ENCODE measurements at regions of chr5 and their contacts with region 1.

Region 1: DNA sequence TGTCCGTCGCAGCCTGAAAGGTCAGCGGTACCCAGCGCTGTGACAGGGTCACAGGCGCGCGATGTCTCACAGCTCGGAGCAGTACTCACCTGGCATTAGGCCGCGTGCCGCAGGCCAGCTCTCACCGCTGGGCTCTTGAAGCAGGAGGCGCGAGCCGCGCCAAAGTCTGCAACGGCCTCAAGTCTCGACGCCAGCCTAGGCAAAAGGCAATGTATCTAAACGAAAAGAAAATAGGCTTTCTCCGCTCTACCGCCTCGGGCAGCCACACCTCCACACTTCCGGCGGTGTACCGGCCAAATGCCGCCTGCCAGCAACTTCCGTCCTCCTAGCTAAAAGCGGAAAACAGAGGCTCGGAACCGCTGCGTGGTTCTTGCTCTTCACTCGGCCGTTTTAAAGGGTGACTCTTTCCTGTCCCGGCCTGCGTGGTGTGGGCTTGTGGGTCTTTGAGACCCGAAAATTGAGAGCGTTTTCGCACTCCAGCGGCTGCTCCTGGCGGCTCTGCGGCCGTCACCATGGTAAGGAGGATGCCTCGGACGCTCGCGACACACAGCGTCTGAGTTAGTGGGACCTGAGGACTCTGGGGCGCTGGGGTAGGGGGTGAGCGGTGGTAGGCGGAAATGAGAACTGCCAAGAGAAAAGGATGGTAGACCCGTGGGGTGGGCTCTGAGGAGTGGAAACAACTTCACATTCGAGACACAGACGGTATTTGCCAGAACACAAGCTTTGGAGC is at the starts of genes GFM2 and NSA2:
- DNase-seq: peak; percentile 96
- H3K4me3 Mint-ChIP-seq: peak within 1 kb of the TSS; percentile 99
- H3K27ac Mint-ChIP-seq: peak within 1 kb of the TSS; percentile 93
- H3K4me1 Mint-ChIP-seq: peaks cover 39% of the 10 kb centered on the region
- H3K27me3 Mint-ChIP-seq: no peaks in the 10 kb centered on the region
- total RNA-seq, gene GFM2: 27.7 to 28.0 TPM
- total RNA-seq, gene NSA2: 119 to 121 TPM

Region 2: GRCh38 chr5:73565139-73565968 is 1201.7 kb before region 1 on chr5 and contains the starts of genes ANKRA2 and UTP15:
- CTCF ChIA-PET with region 1: no interaction called
- intact Hi-C with region 1: loop called (anchors 5 kb)
- DNase-seq: peak; percentile 99
- H3K4me3 Mint-ChIP-seq: peak within 1 kb of the TSS; percentile 99
- H3K27ac Mint-ChIP-seq: peak within 1 kb of the TSS; percentile 99
- H3K4me1 Mint-ChIP-seq: peaks cover 38% of the 10 kb centered on the region
- H3K27me3 Mint-ChIP-seq: no peaks in the 10 kb centered on the region
- total RNA-seq, gene ANKRA2: 26.5 to 26.9 TPM
- total RNA-seq, gene UTP15: 25.3 to 28.5 TPM

Region 3: DNA sequence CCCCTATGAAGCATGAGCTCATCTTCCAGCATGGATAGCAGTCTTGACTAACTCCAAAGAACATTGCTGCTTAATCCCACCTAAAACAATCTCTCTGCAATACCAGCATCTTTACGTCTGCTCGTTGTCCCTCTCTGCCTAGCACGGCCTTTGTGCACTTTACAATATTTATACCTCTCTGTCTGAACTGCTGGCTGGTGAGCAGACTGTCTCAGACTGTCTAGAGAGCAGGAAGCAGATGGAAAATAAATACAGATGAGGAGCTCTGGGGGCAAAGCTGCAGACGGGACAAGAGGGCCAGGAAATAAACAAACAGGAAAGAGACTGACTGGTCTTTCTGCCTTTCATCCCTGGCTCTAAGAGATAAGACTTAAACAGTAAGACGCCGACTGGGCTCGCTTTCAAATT is 351.3 kb before region 1 on chr5:
- CTCF ChIA-PET with region 1: no interaction called
- intact Hi-C with region 1: no loop called
- DNase-seq: no peak
- H3K4me3 Mint-ChIP-seq: no peak overlapping the region
- H3K27ac Mint-ChIP-seq: no peak overlapping the region
- H3K4me1 Mint-ChIP-seq: no peaks in the 10 kb centered on the region
- H3K27me3 Mint-ChIP-seq: peaks cover 9% of the 10 kb centered on the region

Region 4: GRCh38 chr5:74717596-74717995 is 49.4 kb before region 1 on chr5:
- CTCF ChIA-PET with region 1: no interaction called
- intact Hi-C with region 1: no loop called
- DNase-seq: no peak
- H3K4me3 Mint-ChIP-seq: no peak overlapping the region
- H3K27ac Mint-ChIP-seq: no peak overlapping the region
- H3K4me1 Mint-ChIP-seq: no peaks in the 10 kb centered on the region
- H3K27me3 Mint-ChIP-seq: no peaks in the 10 kb centered on the region

Region 5: DNA sequence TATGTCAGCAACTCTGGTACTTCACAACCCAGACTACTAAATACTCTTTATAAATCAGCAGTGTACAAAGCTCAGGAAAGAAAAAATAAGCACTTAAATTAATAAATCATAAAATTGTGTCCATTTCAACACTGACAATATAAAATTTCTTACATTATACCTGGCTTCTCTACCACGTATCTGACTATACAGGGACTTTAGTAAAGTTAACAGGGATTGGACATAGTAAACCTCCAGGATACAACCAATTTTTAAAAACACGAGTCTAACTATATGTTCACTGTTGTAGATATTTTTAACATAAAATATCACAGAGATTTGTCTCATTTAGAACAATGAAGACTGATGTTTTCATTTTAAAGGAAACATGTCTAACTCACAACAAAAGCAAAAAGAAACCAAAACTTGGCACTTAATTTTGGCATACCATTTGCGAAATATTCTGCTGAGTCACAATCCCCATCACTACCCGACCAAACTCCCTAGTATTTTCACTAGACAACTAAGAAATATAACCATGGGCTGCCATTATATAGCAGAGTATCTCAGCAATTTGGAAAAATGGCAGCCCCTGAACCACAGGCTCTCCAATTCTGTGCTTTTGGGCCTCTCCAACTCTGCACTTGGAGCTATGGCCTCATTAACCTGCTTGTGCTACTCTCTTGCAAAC is 84.8 kb after region 1 on chr5:
- CTCF ChIA-PET with region 1: no interaction called
- intact Hi-C with region 1: loop called (anchors 1 kb)
- DNase-seq: peak; percentile 28
- H3K4me3 Mint-ChIP-seq: peak overlapping the region; percentile 55
- H3K27ac Mint-ChIP-seq: peak overlapping the region; percentile 61
- H3K4me1 Mint-ChIP-seq: peaks cover 31% of the 10 kb centered on the region
- H3K27me3 Mint-ChIP-seq: no peaks in the 10 kb centered on the region

Region 6: DNA sequence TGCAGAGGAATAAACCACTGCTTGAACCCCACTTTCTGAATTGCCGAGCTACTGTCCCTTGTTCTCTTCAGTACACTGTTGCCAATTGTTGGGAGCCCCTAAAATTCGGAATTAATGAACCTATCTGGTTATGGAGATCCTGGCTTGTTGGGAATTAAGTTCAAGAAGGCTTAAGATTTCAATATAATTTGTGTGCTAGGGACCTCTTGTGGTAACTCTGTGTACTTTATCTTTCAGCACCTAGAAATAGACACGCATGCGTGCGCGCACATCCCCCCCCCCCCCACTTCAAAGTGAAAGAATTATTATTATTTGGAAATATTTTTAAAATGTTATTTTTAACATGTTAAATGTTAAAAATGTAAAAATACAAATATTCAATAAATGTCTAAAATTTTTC is 152.5 kb after region 1 on chr5:
- CTCF ChIA-PET with region 1: no interaction called
- intact Hi-C with region 1: loop called (anchors 1 kb)
- DNase-seq: no peak
- H3K4me3 Mint-ChIP-seq: no peak overlapping the region
- H3K27ac Mint-ChIP-seq: no peak overlapping the region
- H3K4me1 Mint-ChIP-seq: no peaks in the 10 kb centered on the region
- H3K27me3 Mint-ChIP-seq: peaks cover 2% of the 10 kb centered on the region

Region 7: GRCh38 chr5:76175051-76175666 is 1408.1 kb after region 1 on chr5:
- CTCF ChIA-PET with region 1: no interaction called
- intact Hi-C with region 1: loop called (anchors 5 kb)
- DNase-seq: peak; percentile 67
- H3K4me3 Mint-ChIP-seq: no peak overlapping the region
- H3K27ac Mint-ChIP-seq: no peak overlapping the region
- H3K4me1 Mint-ChIP-seq: peaks cover 14% of the 10 kb centered on the region
- H3K27me3 Mint-ChIP-seq: no peaks in the 10 kb centered on the region